Activated naive CD4-positive, alpha-beta T cell treated with anti-CD3 and anti-CD28 coated beads for 36 hours (primary cell): ENCODE measurements at regions of chr20 and their contacts with region 1.

Region 1: DNA sequence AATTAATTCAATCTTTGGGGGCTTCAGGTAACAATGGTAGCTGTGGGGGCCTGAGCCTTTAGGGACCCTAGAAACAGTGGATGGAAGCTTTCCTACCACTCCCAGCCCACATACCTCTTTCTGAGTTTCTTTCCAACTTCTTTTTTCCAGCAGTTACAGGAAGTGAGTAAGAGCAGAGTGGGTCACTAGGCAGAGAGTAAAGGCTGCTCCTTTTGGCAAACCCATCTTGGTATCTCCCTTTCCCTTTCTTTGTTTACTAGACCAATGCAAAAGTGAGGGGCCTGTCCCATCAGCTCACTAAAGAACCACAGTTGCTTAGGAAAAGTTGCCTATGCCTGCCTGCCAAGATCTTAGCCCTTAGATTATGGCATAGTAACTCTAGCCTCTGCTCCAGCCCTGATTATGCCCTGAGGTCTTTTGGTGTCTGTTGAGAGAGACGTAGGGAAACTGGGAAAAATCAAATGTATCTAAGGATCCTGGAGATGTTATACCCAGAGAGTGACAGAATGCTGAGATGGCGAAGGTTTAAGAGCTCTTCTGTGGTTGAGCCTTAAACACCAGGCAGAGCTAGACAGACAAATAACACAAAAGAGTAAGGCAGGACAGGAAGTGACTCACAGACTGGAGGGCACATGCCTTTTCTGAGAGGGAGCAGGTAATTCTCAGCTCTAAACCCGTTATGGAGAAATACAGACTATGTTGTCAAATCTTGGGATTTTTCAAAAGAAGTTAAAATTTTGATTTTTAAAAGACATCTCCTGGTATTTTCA is 31.3 kb downstream of the TRMT6 start:
- DNase-seq: peak; percentile 16
- H3K4me3 Mint-ChIP-seq: no peak overlapping the region
- H3K27ac Mint-ChIP-seq: no peak overlapping the region
- H3K4me1 Mint-ChIP-seq: peaks cover 14% of the 10 kb centered on the region
- H3K27me3 Mint-ChIP-seq: peaks cover 4% of the 10 kb centered on the region

Region 2: GRCh38 chr20:5855939-5856338 is 63.1 kb before region 1 on chr20:
- CTCF ChIA-PET with region 1: no interaction called
- intact Hi-C with region 1: loop called (anchors 2 kb)
- DNase-seq: no peak
- H3K4me3 Mint-ChIP-seq: no peak overlapping the region
- H3K27ac Mint-ChIP-seq: no peak overlapping the region
- H3K4me1 Mint-ChIP-seq: no peaks in the 10 kb centered on the region
- H3K27me3 Mint-ChIP-seq: no peaks in the 10 kb centered on the region